ENCODE measurements at regions of chr17 and their contacts with region 1.

Region 1: GRCh38 chr17:68539548-68540467 is 27.6 kb downstream of the PRKAR1A start:
- DNase-seq: peak in 4 of 5 donors; percentile 31 to 56 (median 42)
- H3K4me3 ChIP-seq: no peak overlapping the region
- H3K27ac ChIP-seq: no peak overlapping the region
- H3K4me1 ChIP-seq: peaks cover 0 to 3% (median 0%) of the 10 kb centered on the region in 3 donors
- H3K27me3 ChIP-seq: no peaks in the 10 kb centered on the region
- CTCF ChIP-seq: peak; percentile 23

Region 2: GRCh38 chr17:68346448-68346847 is 193.4 kb before region 1 on chr17:
- intact Hi-C with region 1: no loop called
- DNase-seq: peak in 1 of 5 donors; percentile 74
- H3K4me3 ChIP-seq: no peak overlapping the region
- H3K27ac ChIP-seq: no peak overlapping the region
- H3K4me1 ChIP-seq: no peaks in the 10 kb centered on the region
- H3K27me3 ChIP-seq: no peaks in the 10 kb centered on the region
- CTCF ChIP-seq: no peak

Region 3: DNA sequence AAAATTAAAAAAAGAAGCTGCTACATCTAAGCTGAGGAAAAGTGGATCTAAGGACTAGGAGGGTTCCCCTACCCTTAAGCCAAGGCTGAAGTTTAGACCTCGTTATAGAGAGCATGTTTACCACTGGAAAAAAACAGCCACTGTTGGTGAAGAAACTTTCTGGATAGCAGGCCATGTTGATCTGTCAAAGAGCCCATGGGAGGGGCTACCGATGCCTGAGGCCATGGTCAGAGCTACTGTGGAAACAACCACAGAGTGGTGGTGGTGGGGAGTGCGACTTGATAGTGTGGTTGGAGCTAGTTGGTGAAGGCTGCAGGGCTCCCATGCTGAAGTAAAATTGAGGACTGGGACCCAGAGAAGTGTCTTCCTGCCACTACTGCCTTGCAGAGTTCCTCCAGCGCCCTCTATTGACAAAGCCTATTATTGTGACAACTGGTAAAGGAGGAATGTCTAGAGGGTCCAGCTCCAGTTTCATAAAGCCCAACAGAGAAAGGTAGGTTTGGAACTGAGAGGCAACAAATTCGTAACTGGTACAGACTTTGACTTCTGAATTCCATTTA is 74.0 kb after region 1 on chr17:
- intact Hi-C with region 1: loop called (anchors 10 kb)
- DNase-seq: peak in 2 of 5 donors; percentile 63 to 64
- H3K4me3 ChIP-seq: no peak overlapping the region
- H3K27ac ChIP-seq: no peak overlapping the region
- H3K4me1 ChIP-seq: peaks cover 0 to 3% (median 2%) of the 10 kb centered on the region in 3 donors
- H3K27me3 ChIP-seq: no peaks in the 10 kb centered on the region
- CTCF ChIP-seq: peak; percentile 61